CD8-positive, alpha-beta T cell (primary cell): ENCODE measurements at regions of chr5 and their contacts with region 1.

Region 1: DNA sequence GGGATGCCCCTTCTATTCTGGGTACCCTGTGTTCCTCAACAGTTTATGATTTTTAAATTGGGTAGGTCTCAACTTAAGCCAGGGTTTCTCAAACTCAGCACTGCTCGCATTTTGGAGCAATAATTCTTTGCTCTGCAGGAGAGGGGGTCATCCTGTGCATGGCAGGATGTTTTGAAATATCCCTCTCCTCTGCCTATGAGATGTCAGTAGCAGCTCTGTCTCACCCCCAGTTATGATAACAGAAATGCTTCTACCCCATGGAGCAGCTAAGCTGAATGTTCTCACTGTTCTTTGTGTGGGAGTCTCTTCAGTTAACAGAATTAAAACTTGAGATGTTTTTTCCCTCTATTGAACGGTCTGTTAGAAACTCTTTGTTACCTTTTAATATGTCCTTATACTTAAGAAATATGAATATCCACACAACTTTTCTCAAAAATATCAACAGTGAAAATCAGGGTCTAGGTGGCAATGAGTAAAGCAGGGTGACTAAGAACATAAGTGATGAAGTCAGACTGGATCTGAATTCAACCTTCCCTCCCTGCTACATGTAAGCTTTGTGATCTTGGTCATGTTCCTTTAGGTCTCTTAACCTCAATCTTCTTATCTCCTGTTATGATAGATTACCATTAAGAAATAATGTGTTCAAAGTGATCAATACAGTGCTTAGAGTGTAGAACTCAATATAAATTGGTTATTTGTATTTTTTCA is 89.0 kb downstream of the CAMK4 start:
- DNase-seq: no peak
- ATAC-seq: peak; percentile 53
- H3K4me3 ChIP-seq: no peak overlapping the region
- H3K4me3 Mint-ChIP-seq: no peak overlapping the region
- H3K27ac ChIP-seq: no peak overlapping the region
- H3K27ac Mint-ChIP-seq: peak overlapping the region; percentile 77
- H3K4me1 ChIP-seq: peaks cover 50% of the 10 kb centered on the region
- H3K4me1 Mint-ChIP-seq: peaks cover 85% of the 10 kb centered on the region
- H3K27me3 ChIP-seq: no peaks in the 10 kb centered on the region
- H3K27me3 Mint-ChIP-seq: no peaks in the 10 kb centered on the region
- CTCF ChIP-seq: no peak

Region 2: DNA sequence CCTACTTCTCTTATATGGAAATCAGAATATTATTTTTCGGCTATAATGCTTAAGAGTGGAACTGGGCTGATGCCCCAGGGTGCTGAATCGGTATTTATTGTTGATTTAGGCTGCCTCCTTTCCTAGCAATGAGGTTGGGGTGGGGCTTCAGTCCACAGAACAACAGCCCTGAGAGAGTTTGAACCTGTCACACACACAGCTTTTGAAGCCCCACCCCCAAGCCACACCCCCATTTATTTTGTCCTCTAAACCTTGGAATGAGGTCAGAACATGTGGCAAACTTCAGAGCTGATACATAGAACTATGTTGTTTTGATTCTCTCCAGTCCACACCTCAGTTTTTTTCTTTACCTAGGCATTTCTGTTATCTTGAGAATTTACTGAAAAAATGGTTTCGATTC is 140.7 kb before region 1 on chr5:
- CTCF ChIA-PET with region 1: no interaction called
- POLR2A ChIA-PET with region 1: no interaction called
- intact Hi-C with region 1: no loop called
- DNase-seq: peak in 2 of 9 experiments; percentile 3 to 20
- ATAC-seq: no peak
- H3K4me3 ChIP-seq: no peak overlapping the region
- H3K4me3 Mint-ChIP-seq: no peak overlapping the region
- H3K27ac ChIP-seq: no peak overlapping the region
- H3K27ac Mint-ChIP-seq: no peak overlapping the region
- H3K4me1 ChIP-seq: no peaks in the 10 kb centered on the region
- H3K4me1 Mint-ChIP-seq: peaks cover 3% of the 10 kb centered on the region
- H3K27me3 ChIP-seq: no peaks in the 10 kb centered on the region
- H3K27me3 Mint-ChIP-seq: no peaks in the 10 kb centered on the region
- CTCF ChIP-seq: no peak

Region 3: GRCh38 chr5:111337688-111338087 is 24.5 kb after region 1 on chr5:
- CTCF ChIA-PET with region 1: no interaction called
- POLR2A ChIA-PET with region 1: interaction called, 3 read pairs
- intact Hi-C with region 1: loop called in 1 of 2 experiments (anchors 2 kb)
- DNase-seq: no peak
- ATAC-seq: peak; percentile 20
- H3K4me3 ChIP-seq: no peak overlapping the region
- H3K4me3 Mint-ChIP-seq: no peak overlapping the region
- H3K27ac ChIP-seq: no peak overlapping the region
- H3K27ac Mint-ChIP-seq: peak overlapping the region; percentile 82
- H3K4me1 ChIP-seq: peaks cover 39% of the 10 kb centered on the region
- H3K4me1 Mint-ChIP-seq: peaks cover 85% of the 10 kb centered on the region
- H3K27me3 ChIP-seq: no peaks in the 10 kb centered on the region
- H3K27me3 Mint-ChIP-seq: no peaks in the 10 kb centered on the region
- CTCF ChIP-seq: no peak